ENCODE measurements at regions of chr1 and their contacts with region 1.

Region 1: DNA sequence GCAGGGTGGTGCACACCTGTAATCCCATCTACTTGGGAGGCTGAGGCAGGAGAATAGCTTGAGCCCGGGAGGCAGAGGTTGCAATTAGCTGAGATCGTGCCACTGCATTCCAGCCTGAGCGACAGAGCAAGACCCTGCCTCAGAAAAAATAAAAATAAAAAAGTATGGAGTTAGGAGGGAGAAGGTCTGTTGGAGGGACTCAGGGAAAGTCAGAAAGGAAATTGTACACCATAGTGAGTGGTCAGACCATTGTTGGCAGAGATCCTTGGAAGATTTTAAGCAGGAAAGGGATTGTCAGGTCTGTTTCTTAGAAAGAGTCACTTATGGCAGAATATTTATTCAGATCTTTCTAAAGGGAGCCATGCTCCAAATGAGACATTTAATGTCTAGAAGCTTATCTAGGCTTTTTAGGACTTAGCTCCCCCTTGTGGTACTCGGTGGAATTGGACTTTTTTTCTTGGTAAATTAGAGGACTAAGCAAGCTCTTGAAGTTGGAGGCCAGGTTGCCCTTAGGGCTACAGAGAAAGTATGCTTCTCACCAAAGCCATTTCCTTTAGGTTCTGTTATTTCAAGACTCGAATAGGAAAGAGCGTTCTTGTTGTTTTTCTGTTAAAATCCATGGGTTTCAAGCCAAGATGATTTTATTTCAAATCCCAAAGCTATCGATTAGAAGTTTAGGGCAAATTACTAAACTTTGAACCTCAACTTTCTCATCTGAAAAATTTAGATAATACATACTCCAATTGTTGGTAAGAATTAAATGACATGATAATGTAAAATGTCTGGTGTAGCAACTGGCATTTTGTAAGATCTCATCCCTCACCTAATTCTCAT is 16.5 kb downstream of the MIA3 start:
- DNase-seq: peak; percentile 93
- H3K4me3 ChIP-seq: no peak overlapping the region
- H3K27ac ChIP-seq: no peak overlapping the region
- H3K4me1 ChIP-seq: no peaks in the 10 kb centered on the region
- H3K27me3 ChIP-seq: no peaks in the 10 kb centered on the region
- CTCF ChIP-seq: peak; percentile 64 to 72
- POLR2A ChIP-seq: no peak

Region 2: DNA sequence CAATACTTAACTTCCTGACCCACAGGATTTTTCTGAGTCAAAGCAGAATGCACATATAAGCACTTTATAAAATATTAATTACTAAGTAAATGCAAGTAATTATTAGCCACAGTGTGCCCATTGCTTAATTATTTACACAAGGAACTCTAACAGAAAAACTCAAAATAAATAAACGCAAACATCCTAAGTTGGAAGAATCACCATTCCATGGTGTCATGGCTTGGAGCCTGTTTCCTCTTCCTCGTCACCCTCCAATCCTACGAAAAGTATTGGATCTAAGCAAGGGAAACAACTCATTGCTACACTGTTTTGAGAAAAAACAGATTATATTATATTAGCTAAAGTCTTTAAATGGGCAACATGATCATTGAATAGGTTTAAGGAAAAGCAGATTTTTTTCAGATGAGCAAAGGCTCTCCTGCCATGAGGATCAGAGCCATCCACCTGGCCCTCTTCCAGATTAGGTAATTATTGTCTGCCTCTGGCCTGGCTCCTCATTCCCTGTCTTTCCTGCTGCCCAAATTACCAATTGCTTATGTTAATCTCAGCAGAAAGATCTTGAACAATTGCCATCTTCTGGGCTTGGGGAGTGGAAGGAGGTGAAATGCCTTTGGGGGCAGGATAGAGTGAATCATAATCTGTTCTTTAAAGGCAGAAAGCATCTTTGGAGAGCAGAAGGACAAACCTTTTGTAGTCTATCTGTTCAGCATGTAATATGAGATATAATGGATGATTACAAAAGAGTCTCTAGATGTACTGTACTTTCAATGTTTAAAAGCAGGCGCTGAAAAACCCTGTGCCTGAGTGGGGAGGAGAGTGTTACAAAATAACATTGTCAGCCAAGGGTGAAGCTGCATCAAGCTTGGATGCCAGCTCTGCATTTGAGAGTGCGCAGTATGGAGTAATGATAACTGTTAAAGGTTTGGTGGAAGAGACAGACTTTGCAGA is 1013.7 kb before region 1 on chr1:
- CTCF ChIA-PET with region 1: no interaction called
- POLR2A ChIA-PET with region 1: no interaction called
- dilution Hi-C with region 1: no loop called
- intact Hi-C with region 1: no loop called
- DNase-seq: no peak
- H3K4me3 ChIP-seq: no peak overlapping the region
- H3K27ac ChIP-seq: no peak overlapping the region
- H3K4me1 ChIP-seq: no peaks in the 10 kb centered on the region
- H3K27me3 ChIP-seq: no peaks in the 10 kb centered on the region
- CTCF ChIP-seq: no peak
- POLR2A ChIP-seq: no peak

Region 3: DNA sequence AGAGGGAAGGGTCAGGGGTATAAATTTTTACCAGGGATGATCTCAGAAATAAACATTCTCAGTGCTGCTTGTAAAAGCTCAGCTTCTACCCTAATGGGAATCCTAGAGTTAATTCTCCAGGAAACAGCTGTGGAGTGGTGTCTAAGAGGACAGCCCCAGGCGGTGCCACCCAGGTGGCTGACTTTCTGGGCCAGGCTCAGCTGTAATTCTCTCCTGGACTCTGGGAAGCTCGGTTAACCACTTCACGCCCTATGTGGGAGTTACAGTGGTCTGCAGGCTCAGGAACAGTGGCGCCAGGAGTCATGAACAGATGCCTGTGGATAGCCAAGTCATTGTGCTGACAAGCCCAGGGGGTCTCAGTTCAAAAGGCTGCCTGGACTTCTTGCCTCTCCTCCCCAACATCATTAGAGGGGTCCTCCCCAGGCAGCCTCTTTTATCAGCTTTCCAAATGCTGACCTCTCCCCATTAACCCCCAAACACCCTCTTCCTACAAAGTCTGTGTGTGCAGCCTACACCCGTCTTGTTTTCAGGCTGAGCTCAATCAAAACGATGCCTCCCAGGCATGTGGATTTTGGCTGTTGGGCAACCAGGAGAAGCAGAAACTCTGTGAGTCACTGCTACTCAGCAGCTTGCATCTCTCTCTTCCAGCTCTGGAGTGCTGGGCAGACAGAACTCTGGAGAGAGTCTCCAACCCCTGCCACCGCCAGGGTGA is 87.7 kb before region 1 on chr1:
- CTCF ChIA-PET with region 1: interaction called, 4 read pairs
- POLR2A ChIA-PET with region 1: no interaction called
- dilution Hi-C with region 1: no loop called
- intact Hi-C with region 1: loop called (anchors 2 kb)
- DNase-seq: no peak
- H3K4me3 ChIP-seq: no peak overlapping the region
- H3K27ac ChIP-seq: no peak overlapping the region
- H3K4me1 ChIP-seq: no peaks in the 10 kb centered on the region
- H3K27me3 ChIP-seq: peaks cover 3 to 5% of the 10 kb centered on the region in 2 experiments
- CTCF ChIP-seq: no peak
- POLR2A ChIP-seq: no peak

Region 4: GRCh38 chr1:222582099-222582774 is 52.2 kb before region 1 on chr1:
- CTCF ChIA-PET with region 1: interaction called, 10 read pairs
- POLR2A ChIA-PET with region 1: no interaction called
- dilution Hi-C with region 1: no loop called
- intact Hi-C with region 1: no loop called
- DNase-seq: peak; percentile 58
- H3K4me3 ChIP-seq: no peak overlapping the region
- H3K27ac ChIP-seq: peak overlapping the region; percentile 38
- H3K4me1 ChIP-seq: peaks cover 14% of the 10 kb centered on the region
- H3K27me3 ChIP-seq: no peaks in the 10 kb centered on the region
- CTCF ChIP-seq: no peak
- POLR2A ChIP-seq: no peak

Region 5: GRCh38 chr1:222589462-222590302 is 44.7 kb before region 1 on chr1 and contains the start of gene TAF1A:
- CTCF ChIA-PET with region 1: interaction called, 15 read pairs
- POLR2A ChIA-PET with region 1: no interaction called
- dilution Hi-C with region 1: no loop called
- intact Hi-C with region 1: no loop called
- DNase-seq: peak; percentile 60
- H3K4me3 ChIP-seq: peak within 1 kb of the TSS; percentile 49 to 89 (median 72)
- H3K27ac ChIP-seq: peak within 1 kb of the TSS; percentile 45
- H3K4me1 ChIP-seq: peaks cover 11% of the 10 kb centered on the region
- H3K27me3 ChIP-seq: no peaks in the 10 kb centered on the region
- CTCF ChIP-seq: no peak
- POLR2A ChIP-seq: peak; percentile 37
- total RNA-seq, gene TAF1A: 5.3 and 7.1 TPM in 2 replicates

Region 6: DNA sequence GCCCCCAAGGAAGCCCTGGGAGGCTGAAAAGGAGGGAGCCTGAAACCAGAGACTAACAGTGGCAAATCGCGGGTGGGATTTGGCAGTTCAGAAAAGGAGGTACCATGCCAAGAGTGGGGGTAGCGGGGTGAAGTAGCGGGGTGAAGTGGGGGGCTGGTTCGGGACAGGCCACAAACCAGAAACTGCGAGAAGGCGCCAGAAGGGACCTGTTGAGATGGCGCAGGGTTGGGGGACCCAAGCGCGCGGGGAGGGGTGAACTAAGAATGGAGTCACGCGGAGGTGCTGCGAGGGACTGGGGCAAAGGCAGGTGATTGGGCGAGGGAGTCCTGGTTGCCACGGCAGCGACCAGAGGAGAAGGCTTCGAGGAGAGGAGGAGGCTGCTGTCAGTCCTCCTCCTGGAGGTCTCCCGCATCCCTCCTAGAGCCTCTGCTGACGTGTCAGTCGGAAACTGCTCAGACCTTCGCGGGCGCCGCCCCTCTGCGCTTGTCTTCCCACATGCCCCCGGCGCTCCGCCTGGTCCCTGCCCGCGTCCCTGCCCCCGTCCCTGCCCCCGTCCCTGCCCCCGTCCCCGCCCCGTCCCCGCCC is 16.9 kb before region 1 on chr1:
- CTCF ChIA-PET with region 1: interaction called, 34 read pairs
- POLR2A ChIA-PET with region 1: no interaction called
- dilution Hi-C with region 1: no loop called
- intact Hi-C with region 1: loop called (anchors 2 kb)
- DNase-seq: peak; percentile 85
- H3K4me3 ChIP-seq: peak overlapping the region; percentile 19 to 55 (median 31)
- H3K27ac ChIP-seq: peak overlapping the region; percentile 18
- H3K4me1 ChIP-seq: peaks cover 7% of the 10 kb centered on the region
- H3K27me3 ChIP-seq: peaks cover 8 to 29% of the 10 kb centered on the region in 2 experiments
- CTCF ChIP-seq: no peak
- POLR2A ChIP-seq: peak; percentile 63

Measured in endothelial cell of umbilical vein (primary cell).